ENCODE measurements at regions of chr18 and their contacts with region 1.

Region 1: GRCh38 chr18:11980555-11981382 is 538 bp upstream of the IMPA2 start:
- DNase-seq: peak; percentile 99

Region 2: DNA sequence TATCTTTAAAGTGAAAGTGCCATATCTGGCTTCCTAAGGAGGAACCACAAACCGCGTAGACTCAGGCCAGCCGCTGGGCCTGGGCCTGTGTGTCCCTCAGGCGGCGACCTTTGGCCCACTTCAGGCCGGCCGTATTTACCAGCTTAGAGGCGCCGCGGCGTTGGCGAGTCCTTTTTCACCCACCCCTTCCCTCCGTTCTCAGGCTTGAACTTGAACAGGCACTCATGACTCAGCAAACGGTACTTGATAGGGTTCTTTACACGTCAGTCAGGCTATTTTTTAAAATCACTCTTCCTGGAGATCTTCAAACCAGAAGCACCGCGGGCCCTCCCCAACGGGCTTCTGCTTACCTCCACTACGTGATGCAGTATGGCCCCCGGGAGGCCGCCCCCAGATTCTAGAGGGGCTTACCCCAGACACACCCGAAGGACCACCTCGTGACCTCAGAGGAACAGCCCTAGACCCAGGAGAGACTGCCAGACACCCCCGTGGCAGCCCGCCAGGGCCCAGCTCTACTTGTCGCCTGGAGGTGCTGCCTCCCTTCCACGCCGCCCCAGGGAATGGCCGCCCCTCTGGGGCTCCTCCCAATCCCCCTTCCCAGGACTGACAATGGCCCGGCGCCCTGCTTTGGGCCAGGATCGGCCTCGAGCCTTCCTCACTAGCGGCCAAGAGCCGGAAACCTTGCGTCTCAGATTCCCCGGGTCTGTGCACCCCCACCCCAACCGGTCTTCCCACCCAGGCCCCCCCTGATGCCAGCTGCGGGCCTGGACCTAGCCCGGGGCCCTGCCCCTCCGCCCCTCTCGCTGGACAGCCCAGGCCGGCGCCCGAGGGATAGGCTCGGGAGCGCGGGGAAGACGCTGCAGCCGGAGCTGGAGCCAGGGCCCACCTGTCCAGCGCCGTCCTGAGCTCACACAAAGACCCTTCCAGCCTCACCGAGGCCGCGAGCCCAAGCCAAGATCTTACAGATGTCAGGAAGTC is 33.3 kb before region 1 on chr18:
- intact Hi-C with region 1: loop called (anchors 1 kb)
- DNase-seq: peak; percentile 97

Region 3: DNA sequence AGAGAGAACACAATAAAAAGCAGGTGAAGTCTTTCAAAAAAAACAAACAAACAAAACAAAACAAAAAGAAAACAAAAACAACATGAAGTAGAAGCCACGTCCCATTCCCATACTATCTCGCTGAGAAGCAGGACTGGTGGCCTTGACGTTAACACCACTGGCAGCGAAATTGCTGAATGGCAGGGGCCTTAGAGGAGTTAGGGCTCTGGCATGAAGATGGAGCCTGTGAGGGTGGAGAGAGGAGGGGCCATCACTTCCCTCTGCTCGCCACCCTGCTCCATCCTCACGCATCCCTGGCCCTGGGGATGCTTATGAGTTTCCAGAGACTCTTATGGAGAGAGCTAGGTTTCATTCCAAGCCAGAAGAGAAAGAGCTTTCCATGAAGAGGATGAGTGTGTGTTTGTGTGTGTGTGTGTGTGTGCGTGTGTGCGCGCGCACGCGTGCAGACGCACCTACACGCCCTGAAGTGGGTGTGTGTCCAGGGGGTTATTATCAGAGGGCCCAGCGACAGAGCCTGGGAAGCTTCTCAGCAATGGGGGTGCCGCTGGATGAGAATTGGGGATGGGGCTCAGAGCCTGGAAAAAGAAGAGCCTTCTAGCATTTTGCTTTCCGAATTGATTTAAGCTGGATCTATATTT is 19.9 kb before region 1 on chr18:
- intact Hi-C with region 1: no loop called
- DNase-seq: no peak

Region 4: DNA sequence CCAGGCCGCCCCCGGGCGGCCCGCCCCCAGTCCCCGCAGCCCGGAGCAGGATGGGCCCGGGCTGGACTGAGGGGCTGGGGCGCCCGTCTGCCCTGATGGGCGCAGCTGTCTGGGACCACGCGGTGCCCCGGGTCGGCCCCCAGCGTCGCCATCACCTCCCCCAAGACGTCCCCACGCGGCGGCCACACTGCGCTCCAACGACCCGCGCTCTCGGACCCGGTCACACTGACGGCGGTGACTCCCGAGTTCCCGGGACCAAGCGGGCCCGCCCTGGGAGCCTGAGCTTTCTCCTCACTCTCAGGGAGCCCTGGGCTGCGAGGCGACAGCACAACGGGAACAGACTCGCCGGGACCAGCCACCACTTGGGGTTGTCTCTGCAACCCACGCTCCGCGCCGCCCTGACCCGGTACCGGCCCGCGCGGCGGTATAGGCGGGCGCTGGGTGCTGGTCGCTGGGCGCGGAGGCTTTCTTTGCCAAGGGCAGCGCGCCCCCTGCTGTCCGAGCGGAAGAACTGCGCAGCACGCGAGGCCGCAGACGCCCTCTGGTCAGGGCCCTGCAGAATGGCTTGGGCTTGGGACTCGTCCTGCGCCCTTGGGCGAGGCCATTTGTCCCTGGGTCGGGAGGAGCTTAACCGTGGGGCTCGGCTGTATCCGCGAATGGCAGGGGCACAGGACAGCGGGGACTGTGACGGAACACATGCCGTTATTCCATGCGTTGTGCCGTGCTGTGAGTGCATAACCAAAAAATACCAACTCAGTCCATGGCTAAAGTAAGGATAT is 58.1 kb after region 1 on chr18:
- intact Hi-C with region 1: loop called (anchors 10 kb)
- DNase-seq: peak; percentile 94